PC-9 (cell line): ENCODE measurements at regions of chr4 and their contacts with region 1.

Region 1: GRCh38 chr4:82745173-82745842 is 53.3 kb downstream of the SCD5 start:
- DNase-seq: peak; percentile 62 to 68
- H3K4me3 ChIP-seq: no peak overlapping the region
- H3K27ac ChIP-seq: peak overlapping the region; percentile 92
- H3K4me1 ChIP-seq: peaks cover 25% of the 10 kb centered on the region
- H3K27me3 ChIP-seq: no peaks in the 10 kb centered on the region
- CTCF ChIP-seq: no peak

Region 2: GRCh38 chr4:82758701-82759685 is 13.7 kb after region 1 on chr4:
- CTCF ChIA-PET with region 1: no interaction called
- POLR2A ChIA-PET with region 1: no interaction called
- intact Hi-C with region 1: no loop called
- DNase-seq: no peak
- H3K4me3 ChIP-seq: no peak overlapping the region
- H3K27ac ChIP-seq: no peak overlapping the region
- H3K4me1 ChIP-seq: no peaks in the 10 kb centered on the region
- H3K27me3 ChIP-seq: no peaks in the 10 kb centered on the region
- CTCF ChIP-seq: no peak

Region 3: GRCh38 chr4:82785611-82786400 is 40.5 kb after region 1 on chr4:
- CTCF ChIA-PET with region 1: no interaction called
- POLR2A ChIA-PET with region 1: no interaction called
- intact Hi-C with region 1: loop called (anchors 1 kb)
- DNase-seq: peak; percentile 53 to 90
- H3K4me3 ChIP-seq: peak overlapping the region; percentile 45; the same call in 1 of the 2 replicates
- H3K27ac ChIP-seq: peak overlapping the region; percentile 89
- H3K4me1 ChIP-seq: peaks cover 50% of the 10 kb centered on the region
- H3K27me3 ChIP-seq: no peaks in the 10 kb centered on the region
- CTCF ChIP-seq: no peak